CD8-positive, alpha-beta memory T cell (primary cell): ENCODE measurements at regions of chr1 and their contacts with region 1.

Region 1: GRCh38 chr1:182084487-182085316 is 23.2 kb upstream of the ZNF648 start:
- DNase-seq: peak; percentile 48 to 74 (median 56)
- H3K4me3 ChIP-seq: no peak overlapping the region
- H3K4me3 Mint-ChIP-seq: peak overlapping the region in 2 of 7 donors; percentile 9
- H3K27ac ChIP-seq: no peak overlapping the region
- H3K27ac Mint-ChIP-seq: peak overlapping the region in 5 of 8 donors; percentile 5 to 61 (median 51)
- H3K4me1 ChIP-seq: peaks cover 38% of the 10 kb centered on the region
- H3K4me1 Mint-ChIP-seq: peaks cover 24 to 34% (median 31%) of the 10 kb centered on the region in 3 donors
- H3K27me3 ChIP-seq: no peaks in the 10 kb centered on the region
- H3K27me3 Mint-ChIP-seq: peaks cover 0 to 2% of the 10 kb centered on the region in 2 donors

Region 2: GRCh38 chr1:182069028-182069466 is 15.7 kb before region 1 on chr1:
- CTCF ChIA-PET with region 1: interaction called, 22 read pairs
- POLR2A ChIA-PET with region 1: no interaction called
- DNase-seq: no peak
- H3K4me3 ChIP-seq: no peak overlapping the region
- H3K4me3 Mint-ChIP-seq: peak overlapping the region in 1 of 7 donors; percentile 37
- H3K27ac ChIP-seq: no peak overlapping the region
- H3K27ac Mint-ChIP-seq: no peak overlapping the region
- H3K4me1 ChIP-seq: no peaks in the 10 kb centered on the region
- H3K4me1 Mint-ChIP-seq: no peaks in the 10 kb centered on the region
- H3K27me3 ChIP-seq: peaks cover 6% of the 10 kb centered on the region
- H3K27me3 Mint-ChIP-seq: peaks cover 8 to 61% of the 10 kb centered on the region in 2 donors

Region 3: DNA sequence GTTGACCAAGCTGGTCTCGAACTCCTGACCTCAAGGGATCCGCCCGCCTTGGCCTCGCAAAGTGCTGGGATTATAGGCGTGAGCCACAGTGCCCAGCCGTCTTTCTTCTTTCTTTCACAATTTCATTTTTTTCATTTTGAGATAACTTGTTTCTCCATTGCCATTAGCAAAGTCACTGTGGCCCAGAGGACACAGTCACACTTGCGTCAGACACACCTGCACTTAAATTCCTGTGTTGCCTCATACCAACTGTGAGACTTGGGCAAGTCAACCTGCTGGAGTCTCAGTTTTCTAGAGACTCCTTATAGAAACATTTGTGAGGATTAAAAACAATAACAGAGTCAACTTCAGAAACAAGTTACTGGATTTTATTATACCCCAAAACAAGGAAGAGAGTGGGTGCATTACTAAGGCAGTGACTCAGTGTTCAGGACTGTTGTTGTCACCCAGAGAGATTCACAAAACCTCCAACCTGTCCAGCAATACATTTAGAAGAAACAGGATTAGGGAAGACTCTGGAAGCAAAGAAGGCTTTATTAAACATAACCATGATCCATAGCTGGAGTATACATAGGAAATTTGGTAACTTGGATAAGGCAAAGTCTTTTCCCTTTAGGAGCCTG is 313.2 kb after region 1 on chr1:
- CTCF ChIA-PET with region 1: interaction called, 22 read pairs
- POLR2A ChIA-PET with region 1: no interaction called
- DNase-seq: no peak
- H3K4me3 ChIP-seq: no peak overlapping the region
- H3K4me3 Mint-ChIP-seq: no peak overlapping the region
- H3K27ac ChIP-seq: no peak overlapping the region
- H3K27ac Mint-ChIP-seq: no peak overlapping the region
- H3K4me1 ChIP-seq: peaks cover 5% of the 10 kb centered on the region
- H3K4me1 Mint-ChIP-seq: peaks cover 4 to 6% (median 4%) of the 10 kb centered on the region in 3 donors
- H3K27me3 ChIP-seq: no peaks in the 10 kb centered on the region
- H3K27me3 Mint-ChIP-seq: peaks cover 4 to 18% of the 10 kb centered on the region in 2 donors